ENCODE measurements at regions of chr16 and their contacts with region 1.

Region 1: DNA sequence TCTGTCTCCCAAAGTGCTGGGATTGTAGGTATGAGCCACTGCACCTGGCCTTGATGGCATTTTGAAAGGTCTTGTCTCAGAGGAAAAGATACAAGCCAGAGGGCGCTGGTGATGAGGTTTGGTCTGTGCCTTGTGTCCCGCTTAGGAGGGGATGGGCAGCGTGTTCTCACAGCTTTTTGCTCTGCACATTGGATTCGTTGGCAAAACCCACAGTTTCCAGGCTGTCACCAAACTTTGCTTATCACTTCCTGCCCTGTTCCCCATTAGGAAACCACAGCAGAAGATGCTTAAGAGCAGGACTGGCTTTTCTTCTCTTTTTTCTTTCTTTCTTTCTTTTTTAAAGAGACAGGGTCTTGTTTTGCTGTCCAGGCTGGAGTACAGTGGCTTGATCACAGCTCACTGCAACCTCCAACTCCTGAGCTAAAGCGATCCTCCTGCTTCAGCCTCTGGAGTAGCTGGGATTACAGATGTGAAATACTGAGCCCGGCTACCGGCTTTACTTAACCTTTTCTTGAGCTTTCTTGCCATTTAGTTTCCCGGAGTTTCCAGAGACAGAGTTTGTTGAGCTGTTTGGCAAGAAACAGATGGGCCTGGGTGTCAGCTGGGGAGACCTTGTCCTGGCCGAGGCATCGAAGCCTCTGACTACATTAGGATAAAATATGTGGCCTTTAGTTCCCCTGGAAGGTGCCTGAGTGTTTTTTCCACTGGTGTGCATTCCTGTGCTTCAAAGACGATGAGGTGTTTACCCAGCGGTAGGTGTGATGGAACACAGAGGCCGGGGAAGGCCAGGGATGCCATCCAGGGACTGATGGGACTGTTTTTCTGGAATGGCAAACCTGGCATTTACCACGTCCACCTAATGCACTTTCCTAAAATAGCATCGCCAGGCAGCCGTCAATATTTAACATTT is 112.9 kb downstream of the ABCC1 start:
- DNase-seq: peak; percentile 93
- H3K4me3 ChIP-seq: peak overlapping the region in 1 of 4 donors; percentile 18
- H3K27ac ChIP-seq: peak overlapping the region; percentile 87 to 90 (median 88)
- H3K4me1 ChIP-seq: peaks cover 17 to 98% (median 86%) of the 10 kb centered on the region in 4 donors
- H3K27me3 ChIP-seq: no peaks in the 10 kb centered on the region
- CTCF ChIP-seq: peak; percentile 34 to 58 (median 35)
- EP300 ChIP-seq: peak; percentile 97
- POLR2A ChIP-seq: no peak

Region 2: GRCh38 chr16:15857724-15858560 is 204.3 kb before region 1 on chr16:
- intact Hi-C with region 1: loop called (anchors 10 kb)
- DNase-seq: no peak
- H3K4me3 ChIP-seq: peak overlapping the region; percentile 67 to 79 (median 72)
- H3K27ac ChIP-seq: peak overlapping the region; percentile 95 to 98 (median 95)
- H3K4me1 ChIP-seq: peaks cover 16 to 60% (median 47%) of the 10 kb centered on the region in 4 donors
- H3K27me3 ChIP-seq: peaks cover 0 to 19% (median 0%) of the 10 kb centered on the region in 4 donors
- CTCF ChIP-seq: peak in 1 of 3 experiments; percentile 7
- EP300 ChIP-seq: no peak
- POLR2A ChIP-seq: no peak

Region 3: DNA sequence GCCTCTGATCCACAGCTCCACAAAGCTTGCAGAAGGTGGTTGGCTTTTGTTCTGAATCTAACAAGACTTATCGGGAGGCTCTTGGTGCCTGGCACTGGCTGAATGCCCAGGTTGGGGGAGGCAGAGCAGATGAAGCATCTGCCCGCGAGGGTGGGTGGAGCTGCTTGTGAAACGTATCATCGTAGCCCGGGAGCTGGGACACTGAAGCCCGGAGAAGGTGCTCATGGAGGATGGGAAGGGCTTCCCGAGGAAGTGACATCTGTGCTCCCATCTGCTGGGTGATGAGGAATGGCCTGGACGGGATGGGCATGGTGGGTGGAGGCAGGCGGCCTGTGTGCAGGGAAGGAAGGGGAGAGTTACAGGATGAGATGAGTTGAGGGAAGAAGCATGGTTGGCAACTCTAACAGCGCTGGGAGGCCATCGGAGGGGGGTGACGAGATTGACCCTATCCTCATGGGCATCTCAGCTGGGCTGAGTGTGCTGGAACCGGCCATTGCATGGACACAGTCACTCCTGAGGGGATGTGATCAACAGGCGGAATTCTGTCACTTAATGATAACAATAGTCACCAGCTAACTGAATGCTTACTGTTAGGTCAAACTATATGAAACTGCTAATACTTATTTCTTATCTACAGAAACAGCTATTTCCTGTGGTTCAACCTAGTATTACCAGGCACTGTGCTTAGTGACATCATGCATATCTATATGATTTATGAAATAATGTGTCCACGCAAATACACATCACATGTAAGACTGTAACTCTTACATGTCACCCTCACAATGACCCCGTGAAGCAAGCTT is 58.3 kb after region 1 on chr16:
- intact Hi-C with region 1: loop called (anchors 5 kb)
- DNase-seq: peak; percentile 93
- H3K4me3 ChIP-seq: no peak overlapping the region
- H3K27ac ChIP-seq: peak overlapping the region; percentile 72 to 82 (median 76)
- H3K4me1 ChIP-seq: peaks cover 8 to 47% (median 35%) of the 10 kb centered on the region in 4 donors
- H3K27me3 ChIP-seq: no peaks in the 10 kb centered on the region
- CTCF ChIP-seq: no peak
- EP300 ChIP-seq: no peak
- POLR2A ChIP-seq: no peak